ENCODE measurements at regions of chr3 and their contacts with region 1.

Region 1: GRCh38 chr3:144770915-144771351 is 799.3 kb downstream of the DIPK2A start:
- DNase-seq: no peak

Region 2: GRCh38 chr3:143972505-143973255 is 798.3 kb before region 1 on chr3:
- intact Hi-C with region 1: loop called (anchors 2 kb)
- DNase-seq: peak; percentile 32 to 97 (median 72)

Region 3: DNA sequence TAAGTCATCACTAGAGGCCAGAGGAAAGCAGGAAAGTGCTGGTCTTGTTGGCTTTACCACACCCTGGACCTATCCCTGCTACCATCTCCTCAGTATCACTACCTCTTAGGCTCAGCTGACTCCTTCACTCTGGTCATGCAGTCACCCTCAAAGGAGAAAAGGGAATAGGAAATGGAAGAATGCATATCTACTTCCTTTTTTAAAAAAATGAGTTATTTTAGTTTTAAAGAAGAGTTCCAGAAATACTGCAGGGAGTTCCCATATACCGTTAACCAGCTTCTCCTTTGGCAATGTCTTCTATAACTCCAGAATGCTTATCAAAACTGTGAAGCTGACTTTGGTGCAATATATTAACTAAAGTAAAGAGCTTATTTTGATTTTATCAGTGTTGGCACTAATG is 110.7 kb before region 1 on chr3:
- intact Hi-C with region 1: loop called (anchors 10 kb)
- DNase-seq: no peak

Measured in posterior cingulate gyrus (tissue), 11 donors.